A549 (cell line): ENCODE measurements at regions of chr22 and their contacts with region 1.

Region 1: GRCh38 chr22:19800761-19801244 is 40.2 kb downstream of the TBX1 start:
- DNase-seq: peak in 1 of 2 experiments; percentile 39
- ATAC-seq: peak; percentile 74 to 85; a peak in 5 of 6 replicates
- H3K4me3 ChIP-seq: no peak overlapping the region
- H3K27ac ChIP-seq: no peak overlapping the region
- H3K4me1 ChIP-seq: peaks cover under 1% of the 10 kb centered on the region; the same call in 1 of the 3 replicates
- CTCF ChIP-seq: no peak
- EP300 ChIP-seq: no peak
- POLR2A ChIP-seq: no peak
- RAD21 ChIP-seq: peak in 1 of 2 experiments; percentile 16; a peak in 1 of 5 replicates

Region 2: DNA sequence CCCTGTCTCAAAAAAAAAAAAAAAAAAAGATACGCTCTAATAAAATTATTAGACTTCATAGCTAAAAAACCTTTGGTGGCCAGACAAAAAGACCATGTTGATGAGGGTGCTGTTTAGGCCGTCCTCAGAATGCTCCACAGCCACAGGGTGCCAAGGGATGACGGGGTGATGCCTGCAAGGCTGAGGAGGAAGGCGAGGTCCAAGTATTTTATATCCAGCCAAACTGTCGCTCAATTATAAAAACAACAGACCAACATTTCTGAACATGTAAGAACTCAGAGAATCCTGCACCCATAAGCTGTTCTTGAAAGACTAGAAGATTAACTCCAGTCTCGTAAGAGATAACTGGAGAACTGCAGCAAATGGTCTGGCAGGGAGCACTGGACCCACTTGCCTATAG is 11.0 kb before region 1 on chr22:
- CTCF ChIA-PET with region 1: interaction called, 12 read pairs
- POLR2A ChIA-PET with region 1: no interaction called
- DNase-seq: no peak
- ATAC-seq: no peak
- H3K4me3 ChIP-seq: no peak overlapping the region
- H3K27ac ChIP-seq: no peak overlapping the region
- H3K4me1 ChIP-seq: no peaks in the 10 kb centered on the region
- CTCF ChIP-seq: no peak
- EP300 ChIP-seq: no peak
- POLR2A ChIP-seq: no peak
- RAD21 ChIP-seq: no peak